GM12878 (cell line): ENCODE measurements at regions of chr14 and their contacts with region 1.

Region 1: DNA sequence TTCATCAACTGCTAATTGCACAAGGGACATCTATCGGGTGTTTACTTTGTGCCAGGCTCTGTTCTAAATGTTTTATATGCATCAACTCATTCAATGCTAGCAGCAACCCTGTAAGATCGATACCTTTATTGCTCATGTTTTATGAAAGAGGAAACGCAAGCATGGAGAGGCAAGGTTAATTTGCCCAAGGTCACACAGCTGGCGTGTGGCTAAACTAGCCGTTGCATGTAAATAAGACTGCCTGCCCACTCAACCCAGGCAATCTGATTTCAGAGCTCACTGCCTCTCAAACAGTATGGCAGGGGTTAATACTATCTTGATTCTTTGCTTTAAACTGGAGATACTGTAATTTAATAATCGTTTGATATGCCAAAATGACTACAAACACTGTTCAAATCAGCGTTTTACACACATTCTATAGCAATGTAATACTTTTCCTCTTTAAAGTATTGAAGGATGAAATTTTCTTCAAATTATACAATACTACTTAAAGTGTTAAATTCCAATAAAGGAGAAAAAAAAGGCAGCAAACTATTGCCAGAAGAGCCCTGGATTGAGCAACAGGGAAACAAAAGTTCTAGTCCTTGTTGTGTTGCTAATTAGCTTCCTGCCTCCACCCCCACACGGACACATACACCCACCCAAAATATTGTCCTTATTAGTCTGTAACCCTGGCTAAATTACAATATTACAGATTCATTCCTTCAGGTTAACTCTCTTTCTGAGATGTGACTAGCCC is 39.1 kb upstream of the DHRS7 start:
- DNase-seq: peak; percentile 90
- ATAC-seq: peak; percentile 78
- H3K4me3 ChIP-seq: peak overlapping the region; percentile 43; the same call in 1 of the 2 replicates
- H3K27ac ChIP-seq: peak overlapping the region; percentile 91
- H3K4me1 ChIP-seq: peaks cover 44% of the 10 kb centered on the region
- H3K27me3 ChIP-seq: no peaks in the 10 kb centered on the region
- CTCF ChIP-seq: no peak
- EP300 ChIP-seq: peak; percentile 77 to 88; a peak in 3 of 4 replicates
- POLR2A ChIP-seq: no peak
- RAD21 ChIP-seq: no peak

Region 2: GRCh38 chr14:60091550-60092530 is 112.4 kb before region 1 on chr14 and contains the start of gene PCNX4:
- CTCF ChIA-PET with region 1: no interaction called
- POLR2A ChIA-PET with region 1: interaction called, 3 read pairs
- RAD21 ChIA-PET with region 1: no interaction called
- SMC1A ChIA-PET with region 1: no interaction called
- in situ Hi-C with region 1: no loop called
- intact Hi-C with region 1: loop called (anchors 5 kb)
- DNase-seq: peak; percentile 96
- ATAC-seq: peak; percentile 89
- H3K4me3 ChIP-seq: peak within 1 kb of the TSS; percentile 74
- H3K27ac ChIP-seq: peak within 1 kb of the TSS; percentile 95
- H3K4me1 ChIP-seq: peaks cover 11% of the 10 kb centered on the region
- H3K27me3 ChIP-seq: no peaks in the 10 kb centered on the region
- CTCF ChIP-seq: 0 out of 6 replicates have a peak, but pooled peaks of 1 of the 3 experiments have one; percentile 2
- EP300 ChIP-seq: peak; percentile 39 to 50; a peak in 3 of 4 replicates
- POLR2A ChIP-seq: peak; percentile 97
- RAD21 ChIP-seq: no peak
- polyA plus RNA-seq, gene PCNX4: 13.8 to 15.7 TPM

Region 3: GRCh38 chr14:60189923-60190840 is 14.1 kb before region 1 on chr14:
- CTCF ChIA-PET with region 1: interaction called, 61 read pairs
- POLR2A ChIA-PET with region 1: interaction called, 10 read pairs
- RAD21 ChIA-PET with region 1: interaction called, 153 read pairs
- SMC1A ChIA-PET with region 1: interaction called, 199 read pairs
- in situ Hi-C with region 1: no loop called
- intact Hi-C with region 1: no loop called
- DNase-seq: no peak
- ATAC-seq: peak; percentile 69
- H3K4me3 ChIP-seq: no peak overlapping the region
- H3K27ac ChIP-seq: peak overlapping the region; percentile 8; the same call in 1 of the 2 replicates
- H3K4me1 ChIP-seq: peaks cover 10% of the 10 kb centered on the region; the same call in 1 of the 2 replicates
- H3K27me3 ChIP-seq: no peaks in the 10 kb centered on the region
- CTCF ChIP-seq: no peak
- EP300 ChIP-seq: no peak
- POLR2A ChIP-seq: no peak
- RAD21 ChIP-seq: no peak

Region 4: DNA sequence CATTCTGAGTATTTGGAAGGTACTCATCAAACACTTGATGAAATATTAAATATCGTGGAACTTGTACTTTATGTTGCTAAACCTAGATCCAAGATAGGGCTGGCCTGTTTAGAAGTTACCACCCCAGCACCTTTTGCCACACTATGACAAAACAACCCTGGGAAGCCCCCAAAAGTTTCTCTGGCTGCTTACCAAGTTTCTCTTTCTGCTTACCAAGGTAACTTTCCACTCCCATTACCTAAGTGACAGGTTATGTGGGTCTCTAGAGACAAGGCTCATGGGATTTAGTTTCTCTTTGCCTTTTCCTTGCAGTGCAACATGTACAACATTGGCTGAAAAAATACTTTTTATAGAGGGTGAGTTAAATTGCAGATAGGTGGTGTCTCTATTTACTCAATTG is 15.8 kb after region 1 on chr14:
- CTCF ChIA-PET with region 1: interaction called, 21 read pairs
- POLR2A ChIA-PET with region 1: interaction called, 241 read pairs
- RAD21 ChIA-PET with region 1: interaction called, 88 read pairs
- SMC1A ChIA-PET with region 1: interaction called, 202 read pairs
- in situ Hi-C with region 1: no loop called
- intact Hi-C with region 1: loop called (anchors 2 kb)
- DNase-seq: peak; percentile 82
- ATAC-seq: peak; percentile 72
- H3K4me3 ChIP-seq: no peak overlapping the region
- H3K27ac ChIP-seq: peak overlapping the region; percentile 49
- H3K4me1 ChIP-seq: peaks cover 28% of the 10 kb centered on the region
- H3K27me3 ChIP-seq: no peaks in the 10 kb centered on the region
- CTCF ChIP-seq: no peak
- EP300 ChIP-seq: no peak
- POLR2A ChIP-seq: no peak
- RAD21 ChIP-seq: no peak

Region 5: GRCh38 chr14:60339571-60339970 is 135.3 kb after region 1 on chr14:
- CTCF ChIA-PET with region 1: no interaction called
- POLR2A ChIA-PET with region 1: no interaction called
- RAD21 ChIA-PET with region 1: no interaction called
- SMC1A ChIA-PET with region 1: no interaction called
- in situ Hi-C with region 1: no loop called
- intact Hi-C with region 1: no loop called
- DNase-seq: no peak
- ATAC-seq: no peak
- H3K4me3 ChIP-seq: no peak overlapping the region
- H3K27ac ChIP-seq: no peak overlapping the region
- H3K4me1 ChIP-seq: no peaks in the 10 kb centered on the region
- H3K27me3 ChIP-seq: peaks cover 0 to 2% of the 10 kb centered on the region in 2 experiments; a peak in 1 of 4 replicates
- CTCF ChIP-seq: no peak
- EP300 ChIP-seq: no peak
- POLR2A ChIP-seq: no peak
- RAD21 ChIP-seq: no peak